RWPE1 (cell line): ENCODE measurements at regions of chr14 and their contacts with region 1.

Region 1: DNA sequence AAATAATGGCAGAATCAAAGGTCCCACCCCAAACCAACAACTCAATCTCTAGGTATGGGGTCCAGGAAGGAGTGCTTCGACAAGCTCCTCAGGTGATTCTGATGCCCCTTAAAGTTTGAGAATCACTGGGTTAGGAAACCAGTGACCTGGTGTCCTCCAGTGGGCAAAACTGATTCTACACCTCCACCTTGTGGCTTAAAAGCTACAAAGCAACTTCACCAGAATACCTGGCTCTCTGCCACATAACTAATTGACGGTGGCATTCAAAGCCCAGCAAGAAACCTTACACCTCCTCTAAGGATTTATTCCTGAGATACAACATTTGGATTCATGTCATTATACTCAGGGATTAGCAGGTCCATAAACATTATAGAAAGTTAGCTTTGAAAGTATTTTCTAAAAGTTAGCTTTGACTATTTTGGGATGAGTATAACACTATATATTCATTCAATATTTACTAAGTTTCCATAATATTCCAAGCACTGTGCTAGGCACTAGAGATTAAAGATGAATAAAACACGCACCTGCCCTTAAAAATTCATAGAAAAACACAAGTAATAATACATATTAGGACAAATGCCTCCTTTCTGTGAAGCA is 45.4 kb downstream of the DCAF5 start:
- DNase-seq: peak; percentile 71
- H3K27ac ChIP-seq: no peak overlapping the region
- CTCF ChIP-seq: peak; percentile 73

Region 2: GRCh38 chr14:68862954-68863594 is 244.4 kb before region 1 on chr14:
- CTCF ChIA-PET with region 1: interaction called, 20 read pairs
- POLR2A ChIA-PET with region 1: no interaction called
- DNase-seq: peak; percentile 83
- H3K27ac ChIP-seq: no peak overlapping the region
- CTCF ChIP-seq: peak; percentile 81

Region 3: DNA sequence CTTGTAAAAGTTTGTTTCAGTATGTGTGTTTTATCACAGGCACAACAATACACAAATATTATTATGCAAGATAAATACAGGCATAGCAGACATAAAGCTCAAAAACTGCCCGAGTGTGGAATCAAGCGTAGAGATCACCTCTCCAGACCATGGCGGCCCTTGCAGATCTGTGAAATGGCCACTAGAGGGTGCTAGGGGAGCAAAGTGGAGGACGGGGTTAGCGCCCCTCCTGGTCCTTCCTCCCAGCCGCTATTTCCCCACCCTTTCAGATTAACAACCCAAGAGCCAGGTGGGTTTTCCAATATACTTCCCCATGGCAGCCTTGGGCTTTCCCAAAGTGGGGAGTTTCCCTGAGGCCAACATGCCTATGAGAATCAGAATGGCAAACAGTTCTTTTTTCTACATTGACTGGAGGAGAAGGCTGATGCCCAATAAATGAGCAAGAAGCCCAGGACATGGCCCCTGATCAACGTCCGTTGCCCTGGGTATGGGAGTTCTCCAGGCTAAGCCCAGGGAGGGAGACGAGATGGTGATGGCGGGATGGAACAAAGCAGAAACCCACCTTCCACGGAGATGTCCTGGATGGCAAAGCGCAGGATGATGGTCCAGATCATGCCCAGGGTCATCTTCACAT is 195.8 kb before region 1 on chr14:
- CTCF ChIA-PET with region 1: interaction called, 15 read pairs
- POLR2A ChIA-PET with region 1: interaction called, 4 read pairs
- DNase-seq: peak; percentile 88
- H3K27ac ChIP-seq: peak overlapping the region; percentile 61
- CTCF ChIP-seq: peak; percentile 98

Region 4: GRCh38 chr14:69059658-69060623 is 47.6 kb before region 1 on chr14:
- CTCF ChIA-PET with region 1: interaction called, 10 read pairs
- POLR2A ChIA-PET with region 1: interaction called, 3 read pairs
- DNase-seq: peak; percentile 67
- H3K27ac ChIP-seq: no peak overlapping the region
- CTCF ChIP-seq: no peak